Dorsolateral prefrontal cortex (tissue), 120 donors: ENCODE measurements at regions of chr10 and their contacts with region 1.

Region 1: DNA sequence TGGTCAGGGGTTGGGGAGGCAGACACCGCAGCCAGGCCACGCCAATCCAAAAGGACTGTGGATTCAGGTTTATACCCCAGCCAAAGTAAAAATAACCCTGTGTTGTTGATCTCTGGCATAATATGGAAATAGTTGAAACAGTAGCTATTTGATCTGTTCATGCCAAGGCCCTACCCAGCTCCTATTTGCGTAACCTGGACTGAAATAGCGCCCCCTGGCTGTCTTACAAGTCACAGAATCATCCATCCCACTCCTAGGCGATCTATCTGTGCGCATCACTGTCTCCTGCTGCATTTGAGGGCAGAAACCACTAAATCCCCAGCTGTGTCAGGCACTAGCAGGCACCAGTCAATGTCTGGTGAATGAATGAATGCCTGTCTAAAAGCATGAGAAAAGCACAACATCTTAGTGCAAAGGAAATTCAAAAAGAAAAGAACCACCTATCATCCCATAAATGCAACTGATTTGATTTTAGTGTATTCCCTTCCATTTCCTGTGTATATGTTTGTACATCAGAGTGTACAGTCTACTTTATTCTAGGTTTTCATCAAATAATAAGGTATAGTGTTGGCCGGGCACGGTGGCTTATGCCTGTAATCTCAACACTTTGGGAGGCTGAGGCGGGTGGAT is 160.0 kb downstream of the SLIT1 start:
- DNase-seq: peak in 7 of 10 donors; percentile 28 to 79 (median 61)
- H3K4me3 ChIP-seq: no peak overlapping the region
- H3K27ac ChIP-seq: peak overlapping the region in 6 of 59 donors; percentile 4 to 60 (median 18)
- H3K27me3 ChIP-seq: no peaks in the 10 kb centered on the region
- CTCF ChIP-seq: peak; percentile 61 to 88 (median 77)

Region 2: DNA sequence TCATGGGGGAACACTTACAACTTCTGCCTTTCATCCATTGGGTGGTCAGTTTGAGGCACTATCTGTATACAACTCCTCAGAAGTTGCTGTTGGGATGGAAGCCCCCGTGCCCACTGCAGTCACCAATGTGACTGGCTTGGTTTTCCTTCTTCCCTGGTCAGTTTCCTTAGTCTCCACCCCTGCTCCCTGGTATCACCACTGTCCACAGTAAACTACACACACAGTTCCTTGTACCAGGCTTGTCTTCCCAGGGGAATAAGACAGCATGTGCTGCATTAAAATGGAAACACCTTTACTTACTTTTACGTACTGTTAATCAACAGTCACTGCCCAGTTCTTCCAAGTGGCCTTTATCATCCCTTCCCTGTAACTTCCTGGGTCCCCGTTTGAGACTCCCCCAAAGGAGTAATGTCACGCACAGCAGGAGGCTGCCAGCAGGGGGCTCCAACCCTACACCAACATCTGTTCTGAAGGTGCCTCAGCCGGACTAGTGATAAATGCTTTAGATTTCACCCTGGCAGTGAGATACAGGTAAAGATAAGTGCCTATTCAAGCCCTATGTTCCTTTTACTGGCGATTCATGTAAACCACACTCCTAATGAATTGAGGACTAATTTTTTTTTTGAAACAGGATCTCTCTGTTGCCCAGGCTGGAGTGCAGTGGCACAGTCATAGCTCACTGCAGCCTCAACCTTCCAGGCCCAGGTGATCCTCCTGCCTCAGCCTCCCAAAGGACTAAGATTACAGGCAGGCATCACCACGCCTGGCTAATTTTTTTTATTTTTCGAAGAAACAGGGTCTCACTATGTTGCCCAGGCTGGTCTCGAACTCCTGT is 260.1 kb before region 1 on chr10:
- intact Hi-C with region 1: loop called in 1 of 2 experiments (anchors 5 kb)
- DNase-seq: peak in 8 of 10 donors; percentile 52 to 72 (median 64)
- H3K4me3 ChIP-seq: no peak overlapping the region
- H3K27ac ChIP-seq: peak overlapping the region in 2 of 59 donors; percentile 19 to 48
- H3K27me3 ChIP-seq: no peaks in the 10 kb centered on the region
- CTCF ChIP-seq: peak; percentile 46 to 83 (median 72)

Region 3: DNA sequence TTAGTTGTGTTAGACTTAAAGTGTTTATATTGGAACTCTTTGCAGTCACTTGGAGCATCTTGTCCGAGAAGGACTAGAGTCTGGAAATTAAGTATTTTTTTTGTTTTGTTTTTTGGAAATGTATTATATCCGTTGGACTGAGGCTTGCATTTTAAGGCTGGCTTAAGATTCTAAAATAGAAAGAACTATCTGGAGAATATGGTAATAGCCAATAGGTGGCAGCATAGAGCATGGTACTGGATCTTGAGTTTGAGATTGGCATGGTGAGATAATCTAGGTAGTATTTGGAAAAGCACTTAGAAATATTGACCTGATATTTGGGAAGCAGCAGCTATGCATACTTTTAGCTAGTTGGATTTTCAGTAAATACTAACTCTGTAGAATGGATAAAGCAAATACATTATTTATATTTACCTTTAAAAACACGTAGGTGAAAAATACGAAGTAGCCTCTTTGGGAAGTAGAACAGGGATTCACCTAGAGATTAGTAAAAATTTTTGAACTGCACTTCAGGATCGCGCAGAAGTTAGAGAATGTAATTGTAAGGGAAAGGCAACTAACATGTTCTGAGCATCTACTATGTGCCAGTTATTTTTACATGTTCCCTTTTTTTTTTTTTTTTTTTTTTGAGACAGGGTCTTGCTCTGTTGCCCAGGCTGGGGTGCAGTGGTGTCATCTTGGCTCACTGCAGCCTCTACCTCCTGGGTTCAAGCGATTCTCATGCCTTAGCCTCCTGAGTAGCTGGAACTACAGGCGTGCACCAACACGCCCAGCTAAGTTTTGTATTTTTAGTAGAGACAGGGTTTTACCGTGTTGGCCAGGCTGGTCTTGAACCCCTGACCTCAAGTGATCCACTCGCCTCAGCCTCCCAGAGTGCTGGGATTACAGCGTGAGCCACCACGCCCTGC is 115.0 kb before region 1 on chr10:
- intact Hi-C with region 1: loop called in 1 of 2 experiments (anchors 5 kb)
- DNase-seq: no peak
- H3K4me3 ChIP-seq: no peak overlapping the region
- H3K27ac ChIP-seq: peak overlapping the region in 4 of 59 donors; percentile 7 to 25 (median 20)
- H3K27me3 ChIP-seq: no peaks in the 10 kb centered on the region
- CTCF ChIP-seq: peak; percentile 42 to 80 (median 65)